ENCODE measurements at regions of chr11 and their contacts with region 1.

Region 1: DNA sequence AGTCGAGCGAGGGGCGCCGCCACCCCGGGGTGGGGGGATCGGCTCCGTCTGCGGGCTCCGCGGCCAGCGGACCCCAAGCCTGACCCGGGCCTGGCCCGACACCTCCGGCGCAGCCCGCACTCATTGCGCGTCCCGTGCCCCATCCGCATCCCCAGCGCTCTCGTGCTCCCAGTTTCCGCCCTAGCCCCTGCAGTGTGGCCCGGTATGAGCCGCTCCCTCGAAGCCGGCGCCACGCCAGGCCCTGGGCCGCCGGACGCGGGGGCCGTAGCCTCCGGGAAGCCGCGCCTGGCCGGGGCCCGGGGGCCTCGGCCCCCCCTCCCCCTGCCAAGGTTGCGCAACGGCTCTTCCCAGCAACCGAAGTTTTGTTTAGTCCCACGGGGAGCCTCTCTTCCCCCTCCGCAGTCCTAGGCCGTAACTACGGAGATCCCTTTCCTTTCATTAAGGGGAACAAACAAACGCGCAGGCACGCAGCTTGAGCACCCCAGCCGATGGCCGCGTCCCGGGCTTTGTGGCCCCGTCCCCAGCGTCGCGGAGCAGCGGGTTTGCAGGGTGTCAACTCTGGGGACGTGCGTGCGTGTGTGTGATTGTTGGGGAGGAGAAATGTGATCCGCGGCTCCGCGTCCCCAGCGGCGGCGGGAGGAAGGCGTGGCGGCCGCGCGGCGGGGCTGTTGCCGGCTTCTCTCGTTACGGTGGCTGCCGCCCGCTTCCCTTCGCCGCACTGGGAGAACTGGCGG is 883 bp downstream of the HIPK3 start:
- DNase-seq: peak; percentile 48 to 88 (median 73)
- ATAC-seq: peak; percentile 61
- H3K4me3 ChIP-seq: peak overlapping the region; percentile 72 to 98
- H3K4me3 Mint-ChIP-seq: peak overlapping the region; percentile 93
- H3K27ac ChIP-seq: peak overlapping the region; percentile 92 to 98
- H3K27ac Mint-ChIP-seq: peak overlapping the region; percentile 99
- H3K4me1 ChIP-seq: peaks cover 28% of the 10 kb centered on the region
- H3K4me1 Mint-ChIP-seq: peaks cover 46% of the 10 kb centered on the region
- H3K27me3 ChIP-seq: no peaks in the 10 kb centered on the region
- H3K27me3 Mint-ChIP-seq: no peaks in the 10 kb centered on the region
- CTCF ChIP-seq: peak; percentile 23

Region 2: GRCh38 chr11:32583459-32584271 is 674.4 kb before region 1 on chr11 and contains the start of gene EIF3M:
- CTCF ChIA-PET with region 1: no interaction called
- POLR2A ChIA-PET with region 1: no interaction called
- intact Hi-C with region 1: loop called in 1 of 2 experiments (anchors 5 kb)
- DNase-seq: peak; percentile 91 to 98 (median 95)
- ATAC-seq: peak; percentile 98
- H3K4me3 ChIP-seq: peak within 1 kb of the TSS; percentile 80 to 93
- H3K4me3 Mint-ChIP-seq: peak within 1 kb of the TSS; percentile 99
- H3K27ac ChIP-seq: peak within 1 kb of the TSS; percentile 81 to 86
- H3K27ac Mint-ChIP-seq: peak within 1 kb of the TSS; percentile 99
- H3K4me1 ChIP-seq: peaks cover 29% of the 10 kb centered on the region
- H3K4me1 Mint-ChIP-seq: peaks cover 39% of the 10 kb centered on the region
- H3K27me3 ChIP-seq: no peaks in the 10 kb centered on the region
- H3K27me3 Mint-ChIP-seq: no peaks in the 10 kb centered on the region
- CTCF ChIP-seq: no peak
- total RNA-seq, gene EIF3M: 269 to 274 TPM

Region 3: GRCh38 chr11:32960553-32961164 is 297.4 kb before region 1 on chr11:
- CTCF ChIA-PET with region 1: no interaction called
- POLR2A ChIA-PET with region 1: no interaction called
- intact Hi-C with region 1: loop called in 1 of 2 experiments (anchors 5 kb)
- DNase-seq: peak in 2 of 9 experiments; percentile 62 to 69
- ATAC-seq: peak; percentile 46
- H3K4me3 ChIP-seq: no peak overlapping the region
- H3K4me3 Mint-ChIP-seq: no peak overlapping the region
- H3K27ac ChIP-seq: no peak overlapping the region
- H3K27ac Mint-ChIP-seq: no peak overlapping the region
- H3K4me1 ChIP-seq: no peaks in the 10 kb centered on the region
- H3K4me1 Mint-ChIP-seq: no peaks in the 10 kb centered on the region
- H3K27me3 ChIP-seq: no peaks in the 10 kb centered on the region
- H3K27me3 Mint-ChIP-seq: no peaks in the 10 kb centered on the region
- CTCF ChIP-seq: peak; percentile 78

Region 4: DNA sequence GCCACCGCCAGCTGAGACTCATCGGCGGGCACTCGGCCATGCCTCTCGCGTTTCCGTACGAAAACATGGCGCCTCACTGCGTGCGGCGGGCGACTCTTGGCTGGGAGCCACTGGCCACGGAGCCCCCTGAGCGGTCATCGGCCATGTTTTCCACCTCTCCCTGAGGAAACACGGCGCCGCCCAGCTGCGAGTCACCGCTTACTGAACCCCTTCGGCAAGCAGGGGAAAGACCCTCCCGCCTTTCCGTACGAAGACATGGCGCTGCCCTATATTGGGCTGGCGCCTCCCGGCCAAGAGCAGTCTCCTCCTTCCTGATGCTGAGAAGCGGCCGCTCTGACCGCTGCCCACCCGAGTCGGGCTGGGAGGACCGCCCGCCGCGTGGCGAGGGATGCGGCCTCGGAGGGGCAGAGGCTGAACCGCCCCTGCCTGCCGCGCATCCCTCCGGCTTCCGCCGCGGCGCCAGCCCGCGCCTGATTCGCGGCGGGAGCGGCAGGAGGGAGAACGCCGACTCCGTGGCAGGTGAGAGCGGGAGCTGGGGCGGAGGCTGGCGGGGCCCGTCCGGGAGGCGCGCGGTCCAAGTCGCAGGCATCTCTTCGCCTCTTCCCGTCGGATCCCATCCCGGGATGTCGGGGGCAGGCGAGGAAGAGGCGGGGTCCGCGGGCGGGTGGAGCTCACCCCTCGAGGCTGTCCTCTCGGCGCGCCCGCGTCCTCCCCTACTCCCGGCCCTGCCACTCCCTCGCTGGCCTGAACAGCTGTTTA is 218.6 kb before region 1 on chr11 and contains the start of gene TCP11L1:
- CTCF ChIA-PET with region 1: no interaction called
- POLR2A ChIA-PET with region 1: no interaction called
- intact Hi-C with region 1: loop called in 1 of 2 experiments (anchors 2 kb)
- DNase-seq: peak; percentile 60 to 89 (median 83)
- ATAC-seq: peak; percentile 81
- H3K4me3 ChIP-seq: peak within 1 kb of the TSS; percentile 98
- H3K4me3 Mint-ChIP-seq: peak within 1 kb of the TSS; percentile 95
- H3K27ac ChIP-seq: peak within 1 kb of the TSS; percentile 71 to 86
- H3K27ac Mint-ChIP-seq: peak within 1 kb of the TSS; percentile 91
- H3K4me1 ChIP-seq: peaks cover 10% of the 10 kb centered on the region
- H3K4me1 Mint-ChIP-seq: peaks cover 20% of the 10 kb centered on the region
- H3K27me3 ChIP-seq: no peaks in the 10 kb centered on the region
- H3K27me3 Mint-ChIP-seq: no peaks in the 10 kb centered on the region
- CTCF ChIP-seq: no peak
- total RNA-seq, gene TCP11L1: 10.9 to 12.3 TPM

Region 5: GRCh38 chr11:33329705-33330329 is 71.8 kb after region 1 on chr11:
- CTCF ChIA-PET with region 1: no interaction called
- POLR2A ChIA-PET with region 1: no interaction called
- intact Hi-C with region 1: loop called (anchors 1 to 2 kb)
- DNase-seq: peak in 8 of 9 experiments; percentile 21 to 73 (median 41)
- ATAC-seq: peak; percentile 58
- H3K4me3 ChIP-seq: no peak overlapping the region
- H3K4me3 Mint-ChIP-seq: no peak overlapping the region
- H3K27ac ChIP-seq: no peak overlapping the region
- H3K27ac Mint-ChIP-seq: no peak overlapping the region
- H3K4me1 ChIP-seq: no peaks in the 10 kb centered on the region
- H3K4me1 Mint-ChIP-seq: peaks cover 31% of the 10 kb centered on the region
- H3K27me3 ChIP-seq: no peaks in the 10 kb centered on the region
- H3K27me3 Mint-ChIP-seq: no peaks in the 10 kb centered on the region
- CTCF ChIP-seq: peak; percentile 70

Region 6: DNA sequence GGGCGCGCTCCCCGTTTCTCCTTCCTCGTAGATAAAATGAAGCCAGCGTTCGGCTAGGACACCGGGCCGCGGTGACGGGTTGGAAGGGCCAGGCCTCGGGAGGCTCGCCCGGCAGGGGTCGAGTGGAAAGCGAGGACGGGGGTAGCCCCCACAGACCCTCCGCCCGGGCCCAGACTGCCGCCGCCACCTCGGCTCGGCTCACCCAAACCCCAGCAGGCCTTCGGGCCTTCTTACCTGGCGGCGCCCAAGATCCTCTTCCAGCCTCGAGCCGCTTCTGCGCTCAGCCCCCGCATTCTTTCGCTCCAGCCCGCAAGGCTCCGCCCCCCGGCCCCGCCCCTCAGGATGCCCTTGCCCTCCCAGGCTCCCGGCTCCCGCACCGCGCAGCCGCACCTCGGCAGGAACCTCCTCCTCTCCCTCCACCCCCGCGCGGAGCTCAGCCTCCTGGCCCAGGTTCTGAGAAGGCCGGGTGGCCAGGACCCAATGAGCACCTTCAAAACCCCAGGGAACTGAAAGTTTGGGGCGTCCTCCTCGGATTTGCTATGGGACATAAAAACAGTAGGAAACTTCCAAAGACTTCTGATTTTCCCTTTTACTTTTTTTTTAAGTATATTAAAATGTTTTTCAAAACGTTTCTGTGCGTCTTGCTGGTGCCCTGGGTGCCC is 478.2 kb after region 1 on chr11 and contains the start of gene CD59:
- CTCF ChIA-PET with region 1: no interaction called
- POLR2A ChIA-PET with region 1: no interaction called
- intact Hi-C with region 1: loop called in 1 of 2 experiments (anchors 2 kb)
- DNase-seq: peak; percentile 70 to 92 (median 90)
- ATAC-seq: peak; percentile 86
- H3K4me3 ChIP-seq: peak within 1 kb of the TSS; percentile 82 to 93
- H3K4me3 Mint-ChIP-seq: peak within 1 kb of the TSS; percentile 91
- H3K27ac ChIP-seq: peak within 1 kb of the TSS; percentile 54 to 72
- H3K27ac Mint-ChIP-seq: peak within 1 kb of the TSS; percentile 78
- H3K4me1 ChIP-seq: peaks cover 11% of the 10 kb centered on the region
- H3K4me1 Mint-ChIP-seq: peaks cover 31% of the 10 kb centered on the region
- H3K27me3 ChIP-seq: no peaks in the 10 kb centered on the region
- H3K27me3 Mint-ChIP-seq: no peaks in the 10 kb centered on the region
- CTCF ChIP-seq: no peak
- total RNA-seq, gene CD59: 31.0 to 34.5 TPM

Region 7: DNA sequence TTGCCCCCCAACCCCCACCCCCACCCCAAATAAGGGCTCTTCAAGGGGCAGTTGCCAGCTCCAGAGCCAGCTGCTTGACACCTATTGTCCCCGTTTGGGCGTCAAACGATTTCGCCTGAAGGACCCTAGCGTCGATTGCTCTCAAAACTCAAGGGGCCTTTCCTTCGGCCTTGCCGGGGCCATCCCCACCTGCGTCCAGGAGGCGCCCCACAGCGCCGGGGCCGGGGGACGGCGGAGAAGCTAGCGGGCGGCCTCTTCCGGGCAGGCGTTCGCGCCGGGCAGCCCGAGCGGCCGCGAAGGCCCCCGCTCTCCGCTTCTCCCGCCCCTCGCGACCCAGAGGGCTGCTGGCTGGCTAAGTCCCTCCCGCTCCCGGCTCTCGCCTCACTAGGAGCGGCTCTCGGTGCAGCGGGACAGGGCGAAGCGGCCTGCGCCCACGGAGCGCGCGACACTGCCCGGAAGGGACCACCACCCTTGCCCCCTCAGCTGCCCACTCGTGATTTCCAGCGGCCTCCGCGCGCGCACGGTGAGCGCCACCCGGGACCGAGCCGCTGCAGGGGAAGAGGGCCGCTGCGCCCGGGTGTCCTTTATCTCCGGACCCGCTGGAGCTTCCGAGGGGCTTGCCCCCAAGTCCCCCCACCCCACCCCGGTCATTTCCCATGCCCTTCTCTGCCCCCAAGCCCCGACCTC is 793.4 kb after region 1 on chr11 and contains the start of gene CAPRIN1:
- CTCF ChIA-PET with region 1: no interaction called
- POLR2A ChIA-PET with region 1: no interaction called
- intact Hi-C with region 1: loop called in 1 of 2 experiments (anchors 2 kb)
- DNase-seq: peak; percentile 71 to 93 (median 83)
- ATAC-seq: peak; percentile 70
- H3K4me3 ChIP-seq: peak within 1 kb of the TSS; percentile 79 to 85
- H3K4me3 Mint-ChIP-seq: peak within 1 kb of the TSS; percentile 98
- H3K27ac ChIP-seq: peak within 1 kb of the TSS; percentile 98 to 99
- H3K27ac Mint-ChIP-seq: peak within 1 kb of the TSS; percentile 96
- H3K4me1 ChIP-seq: peaks cover 35% of the 10 kb centered on the region
- H3K4me1 Mint-ChIP-seq: peaks cover 29% of the 10 kb centered on the region
- H3K27me3 ChIP-seq: no peaks in the 10 kb centered on the region
- H3K27me3 Mint-ChIP-seq: peaks cover 3% of the 10 kb centered on the region
- CTCF ChIP-seq: no peak
- total RNA-seq, gene CAPRIN1: 92.8 to 102 TPM